PC-9 (cell line): ENCODE measurements at regions of chr1 and their contacts with region 1.

Region 1: DNA sequence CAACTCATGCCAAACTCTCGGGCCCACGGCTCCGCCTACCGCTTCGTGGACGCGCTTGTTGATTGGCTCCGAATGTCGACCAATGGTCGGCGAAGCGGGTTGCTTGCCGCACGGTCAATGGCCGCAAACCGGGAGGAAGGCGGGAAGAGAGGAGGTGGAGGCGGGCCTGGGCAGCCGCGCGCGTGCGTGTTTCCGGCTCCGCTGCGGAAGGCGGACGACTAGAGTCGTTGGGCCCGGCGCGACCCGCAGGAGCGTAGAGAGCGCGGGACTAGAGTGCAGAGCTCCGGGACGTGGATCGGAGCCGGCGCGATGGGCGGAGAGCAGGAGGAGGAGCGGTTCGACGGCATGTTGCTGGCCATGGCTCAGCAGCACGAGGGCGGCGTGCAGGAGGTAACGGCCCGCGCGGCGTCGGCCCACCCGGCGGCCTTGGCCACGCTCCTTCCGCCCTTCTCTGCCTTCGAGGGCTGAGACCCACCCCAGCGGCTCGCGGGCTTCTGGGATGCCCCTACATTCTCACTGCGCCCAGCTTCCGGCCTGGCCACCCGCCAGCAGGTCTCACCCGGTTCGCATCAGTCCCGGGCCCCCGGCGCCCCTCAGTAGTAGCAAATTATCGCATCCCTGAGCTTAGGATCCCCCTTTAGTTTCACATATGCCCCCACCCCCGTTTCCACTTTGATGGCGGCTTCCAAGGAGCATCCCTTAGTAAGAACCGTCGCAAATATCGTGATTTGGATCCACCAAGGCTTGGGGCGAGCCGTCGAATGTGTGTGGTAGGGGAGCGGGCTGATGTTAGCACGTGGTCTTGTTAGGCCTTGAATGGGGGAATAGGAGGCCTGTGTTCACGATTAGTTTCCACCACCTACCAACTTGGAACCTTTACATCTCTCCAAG is at the start of gene NUDC:
- DNase-seq: peak; percentile 85 to 94
- H3K4me3 ChIP-seq: peak within 1 kb of the TSS; percentile 73
- H3K27ac ChIP-seq: peak within 1 kb of the TSS; percentile 53
- H3K4me1 ChIP-seq: peaks cover 12% of the 10 kb centered on the region
- H3K27me3 ChIP-seq: no peaks in the 10 kb centered on the region
- CTCF ChIP-seq: no peak
- total RNA-seq, gene NUDC: 93.6 and 104 TPM in 2 replicates

Region 2: DNA sequence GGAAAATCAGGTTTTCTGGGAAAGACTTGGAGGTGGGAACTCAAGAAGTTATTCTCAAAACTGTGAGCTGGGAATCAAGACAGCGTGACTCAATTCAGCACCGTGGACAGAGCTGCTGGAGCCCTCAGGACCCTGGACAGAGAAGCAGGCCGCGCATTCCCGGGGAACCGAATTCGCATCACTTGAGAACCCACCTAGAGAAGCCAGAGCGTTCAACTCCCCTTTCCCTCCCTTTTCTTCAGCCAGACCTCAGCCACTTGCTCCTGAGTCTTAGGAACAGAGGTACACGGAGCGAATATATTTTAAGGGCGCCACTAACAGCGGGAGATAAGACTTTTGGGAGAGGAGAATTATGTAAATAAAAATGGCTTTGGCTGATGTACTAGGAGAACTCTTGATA is 513.2 kb before region 1 on chr1:
- CTCF ChIA-PET with region 1: no interaction called
- POLR2A ChIA-PET with region 1: no interaction called
- intact Hi-C with region 1: no loop called
- DNase-seq: peak; percentile 46 to 71
- H3K4me3 ChIP-seq: no peak overlapping the region
- H3K27ac ChIP-seq: no peak overlapping the region
- H3K4me1 ChIP-seq: peaks cover 12% of the 10 kb centered on the region
- H3K27me3 ChIP-seq: no peaks in the 10 kb centered on the region
- CTCF ChIP-seq: no peak

Region 3: GRCh38 chr1:26645734-26646133 is 276.1 kb before region 1 on chr1:
- CTCF ChIA-PET with region 1: no interaction called
- POLR2A ChIA-PET with region 1: interaction called, 13 read pairs
- intact Hi-C with region 1: no loop called
- DNase-seq: no peak
- H3K4me3 ChIP-seq: no peak overlapping the region
- H3K27ac ChIP-seq: no peak overlapping the region
- H3K4me1 ChIP-seq: no peaks in the 10 kb centered on the region
- H3K27me3 ChIP-seq: no peaks in the 10 kb centered on the region
- CTCF ChIP-seq: no peak

Region 4: DNA sequence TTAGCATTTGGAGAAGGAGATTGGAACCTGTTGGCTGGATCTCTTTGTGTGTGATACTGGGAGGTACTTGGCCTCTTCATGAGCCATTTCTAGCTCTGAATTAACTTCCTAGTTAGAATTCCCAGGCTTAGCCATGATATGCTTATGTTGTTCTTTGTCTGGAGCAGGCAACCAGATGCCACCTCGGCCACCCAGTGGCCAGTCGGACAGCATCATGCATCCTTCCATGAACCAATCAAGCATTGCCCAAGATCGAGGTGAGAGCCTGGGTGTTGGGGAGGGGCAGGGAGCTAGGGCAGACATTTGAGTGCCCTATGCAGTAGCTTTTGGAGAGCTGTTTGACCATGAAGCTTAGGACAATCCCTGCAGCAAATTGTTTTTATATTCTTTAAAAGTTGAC is 160.6 kb before region 1 on chr1:
- CTCF ChIA-PET with region 1: no interaction called
- POLR2A ChIA-PET with region 1: no interaction called
- intact Hi-C with region 1: no loop called
- DNase-seq: no peak
- H3K4me3 ChIP-seq: no peak overlapping the region
- H3K27ac ChIP-seq: no peak overlapping the region
- H3K4me1 ChIP-seq: no peaks in the 10 kb centered on the region
- H3K27me3 ChIP-seq: no peaks in the 10 kb centered on the region
- CTCF ChIP-seq: no peak; the same call in 1 of the 2 replicates

Region 5: DNA sequence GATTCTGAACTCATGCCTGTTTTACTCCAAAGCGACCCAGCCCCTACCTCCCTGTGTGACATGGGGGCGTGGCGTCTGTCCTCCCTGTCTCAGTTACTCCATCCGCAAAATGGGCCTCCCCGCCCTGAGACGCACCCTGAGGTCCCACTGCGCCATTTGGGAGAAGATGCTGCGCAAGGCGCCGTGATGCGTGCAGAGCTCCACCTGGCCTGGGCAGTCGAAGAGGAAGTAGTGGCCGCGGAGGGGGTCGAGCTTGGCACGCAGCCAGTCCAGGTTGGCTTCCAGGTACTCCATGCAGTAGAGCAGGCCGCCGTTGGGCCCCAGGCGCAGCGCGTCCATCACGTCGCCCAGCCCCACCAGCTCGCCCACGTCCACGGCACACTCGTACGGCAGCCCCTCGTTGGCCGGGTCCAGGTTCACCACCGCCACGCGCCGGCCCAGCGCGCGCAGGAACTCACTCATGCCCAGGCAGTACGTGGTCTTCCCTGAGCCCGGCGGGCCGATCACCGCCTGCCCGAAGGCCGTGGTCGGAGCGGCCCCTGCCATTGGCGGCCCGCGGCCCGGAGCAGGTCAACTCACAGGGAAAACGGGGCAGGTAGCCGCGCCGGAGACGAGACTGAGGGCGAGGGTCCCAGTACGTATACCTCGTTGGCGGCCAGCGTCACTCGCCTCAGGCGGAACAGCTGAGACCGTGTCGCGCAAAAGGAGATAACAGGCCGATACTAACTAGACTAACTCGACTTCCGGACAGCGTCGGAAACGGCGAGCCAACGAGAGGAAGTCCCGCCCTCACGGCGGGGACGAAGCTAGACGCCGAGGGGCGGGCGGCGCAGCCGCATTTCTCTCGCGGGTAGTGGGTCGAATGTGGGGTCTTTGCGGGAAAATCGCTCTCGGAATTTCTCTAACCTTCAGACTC is 32.0 kb before region 1 on chr1 and contains the start of gene GPN2:
- CTCF ChIA-PET with region 1: no interaction called
- POLR2A ChIA-PET with region 1: no interaction called
- intact Hi-C with region 1: loop called (anchors 2 kb)
- DNase-seq: peak; percentile 63 to 65
- H3K4me3 ChIP-seq: peak within 1 kb of the TSS; percentile 65
- H3K27ac ChIP-seq: peak within 1 kb of the TSS; percentile 62
- H3K4me1 ChIP-seq: 0 out of 2 replicates have a peak, but pooled peaks cover 10% of the 10 kb centered on the region
- H3K27me3 ChIP-seq: no peaks in the 10 kb centered on the region
- CTCF ChIP-seq: no peak
- total RNA-seq, gene GPN2: 23.8 and 30.6 TPM in 2 replicates

Region 6: GRCh38 chr1:26900001-26900814 is 21.6 kb before region 1 on chr1 and contains the start of gene GPATCH3:
- CTCF ChIA-PET with region 1: interaction called, 6 read pairs
- POLR2A ChIA-PET with region 1: interaction called, 6 read pairs
- intact Hi-C with region 1: loop called (anchors 2 kb)
- DNase-seq: peak; percentile 70 to 83
- H3K4me3 ChIP-seq: peak within 1 kb of the TSS; percentile 88
- H3K27ac ChIP-seq: peak within 1 kb of the TSS; percentile 81
- H3K4me1 ChIP-seq: peaks cover 15% of the 10 kb centered on the region; the same call in 1 of the 2 replicates
- H3K27me3 ChIP-seq: no peaks in the 10 kb centered on the region
- CTCF ChIP-seq: no peak
- total RNA-seq, gene GPATCH3: 13.1 and 16.7 TPM in 2 replicates

Region 7: GRCh38 chr1:26942656-26943055 is 20.9 kb after region 1 on chr1:
- CTCF ChIA-PET with region 1: interaction called, 3 read pairs
- POLR2A ChIA-PET with region 1: interaction called, 10 read pairs
- intact Hi-C with region 1: no loop called
- DNase-seq: no peak
- H3K4me3 ChIP-seq: no peak overlapping the region
- H3K27ac ChIP-seq: no peak overlapping the region
- H3K4me1 ChIP-seq: no peaks in the 10 kb centered on the region
- H3K27me3 ChIP-seq: no peaks in the 10 kb centered on the region
- CTCF ChIP-seq: no peak